WTC11 (cell line): ENCODE measurements at regions of chr17 and their contacts with region 1.

Region 1: DNA sequence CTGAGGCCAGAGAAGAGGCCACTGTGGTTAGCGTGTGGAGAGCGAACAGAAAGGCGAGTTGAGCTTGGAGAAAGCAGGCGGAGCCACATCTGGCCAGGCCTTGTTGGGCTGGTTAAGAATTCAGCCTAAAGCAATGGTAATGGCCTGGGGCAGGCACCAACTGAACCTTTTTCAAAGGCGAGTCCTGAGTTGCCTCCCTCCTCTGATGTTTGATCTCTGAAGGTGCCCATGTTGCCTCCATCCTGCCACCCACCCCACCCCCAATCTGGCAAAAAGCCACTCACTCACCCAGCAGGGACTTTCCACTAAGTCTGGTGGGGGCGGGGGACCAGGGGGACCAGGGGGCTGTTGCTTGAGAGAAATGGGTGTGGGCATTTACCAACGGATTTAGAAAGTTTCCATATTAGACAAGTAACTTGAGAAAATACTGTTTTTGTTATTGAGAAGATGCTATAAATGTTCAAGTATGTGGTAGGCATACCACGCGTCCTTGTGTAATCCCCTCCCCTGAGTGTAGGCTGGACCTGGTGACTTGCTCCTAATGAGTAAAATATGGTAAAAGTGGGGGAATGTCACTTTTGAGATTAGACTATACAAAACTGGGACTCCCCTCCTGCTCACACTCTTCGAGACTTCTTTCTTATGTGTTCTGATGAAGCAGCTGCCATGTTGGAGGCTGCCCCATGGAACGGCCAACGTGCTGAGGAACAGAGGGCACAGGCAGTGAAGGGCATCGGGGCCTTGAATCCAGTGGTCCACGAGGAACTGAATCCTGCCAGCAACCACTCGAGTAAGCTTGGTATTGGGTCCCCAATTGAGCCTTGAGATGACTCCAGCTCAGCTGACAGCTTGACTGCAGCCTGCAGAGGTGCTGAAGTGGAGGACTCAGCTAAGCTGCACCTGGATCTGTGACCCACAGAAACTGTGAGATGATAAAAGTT is 29.9 kb upstream of the TNS4 start:
- DNase-seq: peak; percentile 8
- ATAC-seq: no peak
- H3K4me3 Mint-ChIP-seq: no peak overlapping the region
- H3K27ac Mint-ChIP-seq: no peak overlapping the region
- H3K4me1 Mint-ChIP-seq: peaks cover 19% of the 10 kb centered on the region
- H3K27me3 Mint-ChIP-seq: no peaks in the 10 kb centered on the region; the same call in 1 of the 2 replicates
- CTCF ChIP-seq: no peak

Region 2: DNA sequence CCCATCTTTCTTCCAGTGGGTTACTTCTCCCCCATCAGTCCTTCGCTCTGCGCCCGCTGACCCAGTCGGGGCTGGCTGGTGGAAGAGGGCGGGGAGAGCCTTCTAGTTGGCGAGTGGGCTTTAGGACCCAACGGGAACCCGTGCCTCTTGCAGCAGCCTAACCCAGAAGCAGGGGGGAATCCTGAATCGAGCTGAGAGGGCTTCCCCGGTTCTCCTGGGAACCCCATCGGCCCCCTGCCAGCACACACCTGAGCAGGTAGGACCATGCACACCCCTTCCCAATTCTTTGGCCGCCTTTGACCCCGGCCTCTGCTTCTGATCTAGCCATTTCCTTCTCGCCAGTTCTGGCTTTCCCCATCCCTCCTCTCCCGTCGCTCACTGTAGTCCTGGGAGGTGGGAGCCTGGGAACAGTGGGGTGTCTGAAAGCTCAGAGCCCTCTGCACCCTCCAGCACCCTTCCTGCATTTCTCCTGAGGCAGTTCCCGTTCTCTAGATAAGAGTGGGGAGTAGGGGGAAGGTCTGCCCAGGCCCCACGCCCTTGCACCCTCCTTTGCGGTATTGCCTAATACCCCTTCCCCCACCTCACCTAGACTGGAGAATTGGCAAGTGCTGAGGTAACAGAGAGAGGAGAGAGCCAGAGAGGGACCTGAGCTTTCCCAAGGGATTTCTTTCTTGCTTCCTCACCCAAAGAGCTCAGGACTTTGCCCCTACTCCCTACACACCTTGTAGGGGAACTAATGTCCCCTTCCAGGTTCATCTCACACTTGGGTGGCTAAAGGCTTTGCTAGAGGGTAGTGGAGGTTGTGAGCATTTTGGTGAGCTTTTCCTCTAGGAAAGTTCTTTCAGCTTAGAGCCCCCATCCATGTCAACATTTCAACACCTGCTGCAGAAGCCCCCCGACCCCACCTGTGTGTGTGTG is 222.0 kb before region 1 on chr17 and contains the start of gene RARA:
- CTCF ChIA-PET with region 1: interaction called, 10 read pairs
- POLR2A ChIA-PET with region 1: no interaction called
- DNase-seq: peak; percentile 83
- ATAC-seq: peak; percentile 77
- H3K4me3 Mint-ChIP-seq: no peak within 1 kb of the TSS
- H3K27ac Mint-ChIP-seq: no peak within 1 kb of the TSS
- H3K4me1 Mint-ChIP-seq: peaks cover 40% of the 10 kb centered on the region
- H3K27me3 Mint-ChIP-seq: no peaks in the 10 kb centered on the region
- CTCF ChIP-seq: no peak
- total RNA-seq, gene RARA: 14.3 to 20.7 TPM (median 15.8 TPM) in 3 replicates

Region 3: DNA sequence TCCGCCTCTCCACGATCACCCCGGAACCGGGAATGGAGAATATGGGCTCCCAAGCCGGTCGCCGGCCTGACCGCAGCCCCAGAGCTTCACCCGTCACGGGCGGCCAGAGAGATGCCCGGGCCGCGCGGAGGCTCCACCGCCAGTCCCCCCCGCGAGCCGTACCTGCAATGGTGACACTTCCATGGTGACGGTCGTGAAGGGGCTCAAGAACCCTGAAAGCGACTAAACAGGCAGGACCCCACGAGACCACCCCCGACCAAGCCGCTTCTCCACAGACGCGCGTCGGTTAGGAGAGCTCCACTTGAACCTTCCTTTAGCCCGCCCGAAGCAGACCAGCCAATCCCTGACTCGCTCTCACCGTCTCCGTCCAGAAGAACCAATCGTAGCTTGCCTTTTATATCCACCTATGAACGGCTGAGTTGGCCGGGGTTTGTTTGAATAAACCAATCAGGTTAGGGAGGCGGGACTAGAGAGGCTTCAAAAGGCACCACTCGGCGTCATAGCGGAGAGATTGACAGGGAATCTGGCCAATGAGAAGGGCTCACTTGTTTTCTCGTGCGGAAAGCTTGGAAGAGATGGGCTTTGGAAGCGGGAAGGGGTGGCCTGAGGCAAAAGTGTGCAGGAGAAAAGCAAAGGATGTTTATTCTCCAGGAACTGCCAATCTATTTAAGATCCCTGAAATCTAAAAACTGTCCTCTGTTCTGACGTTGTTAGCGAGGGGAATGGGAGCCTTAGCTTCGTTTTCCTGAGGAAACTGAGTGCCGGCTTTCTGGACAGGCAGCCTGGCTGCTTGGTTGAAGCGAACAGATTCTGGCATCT is 113.5 kb before region 1 on chr17 and contains the start of gene TOP2A:
- CTCF ChIA-PET with region 1: interaction called, 41 read pairs
- POLR2A ChIA-PET with region 1: interaction called, 7 read pairs
- DNase-seq: peak; percentile 97
- ATAC-seq: peak; percentile 95
- H3K4me3 Mint-ChIP-seq: peak within 1 kb of the TSS; percentile 97
- H3K27ac Mint-ChIP-seq: peak within 1 kb of the TSS; percentile 84
- H3K4me1 Mint-ChIP-seq: peaks cover 49% of the 10 kb centered on the region
- H3K27me3 Mint-ChIP-seq: no peaks in the 10 kb centered on the region; the same call in 1 of the 2 replicates
- CTCF ChIP-seq: no peak
- total RNA-seq, gene TOP2A: 273 to 307 TPM (median 292 TPM) in 3 replicates

Region 4: DNA sequence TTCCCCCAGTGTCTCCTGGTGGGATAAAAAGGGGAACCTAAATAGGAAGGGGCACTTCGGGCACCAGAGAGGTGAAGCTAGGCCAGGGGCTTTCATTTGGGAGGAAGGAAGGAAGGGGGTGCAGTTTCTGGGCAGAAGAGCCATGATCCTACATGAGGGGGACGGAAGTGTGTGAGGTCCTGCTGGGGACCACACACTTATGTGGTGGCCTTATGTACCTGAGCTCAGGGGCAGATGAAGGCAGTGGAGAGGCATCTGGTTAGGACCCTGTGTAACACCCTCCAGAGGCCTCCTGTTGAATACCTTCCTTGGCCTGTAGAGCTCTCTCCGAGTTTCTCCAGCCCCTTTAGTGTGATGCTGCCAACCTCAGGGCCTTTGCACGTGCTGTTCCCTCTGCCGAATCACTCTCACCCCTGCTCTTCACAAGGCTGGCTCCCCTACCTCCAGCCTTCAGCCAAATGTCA is 66.9 kb before region 1 on chr17:
- CTCF ChIA-PET with region 1: interaction called, 12 read pairs
- POLR2A ChIA-PET with region 1: no interaction called
- DNase-seq: no peak
- ATAC-seq: peak; percentile 8
- H3K4me3 Mint-ChIP-seq: no peak overlapping the region
- H3K27ac Mint-ChIP-seq: peak overlapping the region; percentile 57
- H3K4me1 Mint-ChIP-seq: peaks cover 59% of the 10 kb centered on the region
- H3K27me3 Mint-ChIP-seq: peaks cover 3% of the 10 kb centered on the region
- CTCF ChIP-seq: no peak

Region 5: DNA sequence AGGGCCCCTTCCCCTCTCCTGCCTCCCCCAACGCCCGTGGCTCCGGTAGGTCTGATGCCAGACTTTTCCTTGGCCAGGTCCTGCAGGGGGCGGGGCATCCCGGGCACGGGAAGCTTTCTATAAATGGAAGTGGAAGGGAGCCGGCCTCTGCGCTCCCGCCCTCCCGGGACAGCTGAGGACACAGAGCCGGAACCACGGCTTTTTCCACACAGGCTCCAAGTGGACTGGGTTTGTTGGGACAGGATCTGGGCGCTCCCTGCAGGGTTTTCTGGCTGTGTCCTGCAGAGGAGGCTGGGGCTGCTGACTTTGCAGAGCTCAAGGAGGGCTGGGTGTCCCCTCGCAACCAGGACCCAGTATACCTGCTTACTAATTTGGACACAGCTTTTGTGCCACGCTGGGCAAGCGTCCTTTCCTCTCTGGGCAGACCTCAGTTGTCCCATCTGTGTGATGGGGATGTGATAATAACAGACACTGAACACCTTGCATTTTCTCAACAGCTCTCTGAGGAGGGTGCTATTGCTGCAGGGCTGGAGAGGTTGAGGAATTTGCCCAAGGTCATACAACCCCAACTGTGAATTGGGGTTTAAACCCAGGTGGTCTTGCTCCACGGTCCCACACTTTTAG is 31.7 kb before region 1 on chr17:
- CTCF ChIA-PET with region 1: interaction called, 24 read pairs
- POLR2A ChIA-PET with region 1: interaction called, 3 read pairs
- DNase-seq: peak; percentile 87
- ATAC-seq: peak; percentile 91
- H3K4me3 Mint-ChIP-seq: peak overlapping the region; percentile 54
- H3K27ac Mint-ChIP-seq: peak overlapping the region; percentile 95
- H3K4me1 Mint-ChIP-seq: peaks cover 43% of the 10 kb centered on the region
- H3K27me3 Mint-ChIP-seq: no peaks in the 10 kb centered on the region; the same call in 1 of the 2 replicates
- CTCF ChIP-seq: no peak

Region 6: GRCh38 chr17:40559954-40560591 is 28.8 kb after region 1 on chr17:
- CTCF ChIA-PET with region 1: interaction called, 127 read pairs
- POLR2A ChIA-PET with region 1: interaction called, 7 read pairs
- DNase-seq: peak; percentile 93
- ATAC-seq: peak; percentile 83
- H3K4me3 Mint-ChIP-seq: no peak overlapping the region
- H3K27ac Mint-ChIP-seq: no peak overlapping the region
- H3K4me1 Mint-ChIP-seq: peaks cover 42% of the 10 kb centered on the region
- H3K27me3 Mint-ChIP-seq: peaks cover 5% of the 10 kb centered on the region
- CTCF ChIP-seq: peak; percentile 96

Region 7: GRCh38 chr17:40608061-40608588 is 76.8 kb after region 1 on chr17:
- CTCF ChIA-PET with region 1: no interaction called
- POLR2A ChIA-PET with region 1: no interaction called
- DNase-seq: no peak
- ATAC-seq: no peak
- H3K4me3 Mint-ChIP-seq: no peak overlapping the region
- H3K27ac Mint-ChIP-seq: no peak overlapping the region
- H3K4me1 Mint-ChIP-seq: peaks cover 17% of the 10 kb centered on the region
- H3K27me3 Mint-ChIP-seq: no peaks in the 10 kb centered on the region; the same call in 1 of the 2 replicates
- CTCF ChIP-seq: no peak